Right lobe of liver (tissue), 6 donors: ENCODE measurements at regions of chr5 and their contacts with region 1.

Region 1: DNA sequence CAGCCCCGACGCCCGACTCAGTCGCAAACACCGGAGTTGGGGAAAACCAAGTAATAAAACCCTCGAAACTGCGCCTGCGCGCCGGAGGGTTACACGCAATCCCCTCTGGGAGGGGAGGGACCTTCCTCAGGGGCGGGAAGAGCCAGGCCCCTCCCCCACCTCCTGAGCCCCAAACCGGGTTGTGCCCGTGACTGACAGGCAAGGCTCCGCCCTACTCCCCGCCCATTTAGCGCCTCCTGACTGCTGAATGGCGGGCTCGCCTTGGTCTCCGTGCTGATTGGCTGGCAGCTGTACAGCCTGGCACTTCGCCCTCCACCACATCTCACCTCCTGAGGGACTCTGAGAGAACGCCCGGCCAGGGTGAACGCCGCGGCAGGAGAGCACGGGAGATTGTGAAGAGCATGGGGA is at the start of gene PRDM9:
- DNase-seq: peak; percentile 67 to 90 (median 88)
- ATAC-seq: peak; percentile 87 to 98 (median 98)
- H3K4me3 ChIP-seq: peak within 1 kb of the TSS; percentile 16 to 40 (median 33)
- H3K27ac ChIP-seq: peak within 1 kb of the TSS in 2 of 3 donors; percentile 44 to 60
- H3K4me1 ChIP-seq: no peaks in the 10 kb centered on the region
- H3K27me3 ChIP-seq: no peaks in the 10 kb centered on the region
- CTCF ChIP-seq: no peak
- POLR2A ChIP-seq: no peak
- total RNA-seq, gene PRDM9: not detected

Region 2: DNA sequence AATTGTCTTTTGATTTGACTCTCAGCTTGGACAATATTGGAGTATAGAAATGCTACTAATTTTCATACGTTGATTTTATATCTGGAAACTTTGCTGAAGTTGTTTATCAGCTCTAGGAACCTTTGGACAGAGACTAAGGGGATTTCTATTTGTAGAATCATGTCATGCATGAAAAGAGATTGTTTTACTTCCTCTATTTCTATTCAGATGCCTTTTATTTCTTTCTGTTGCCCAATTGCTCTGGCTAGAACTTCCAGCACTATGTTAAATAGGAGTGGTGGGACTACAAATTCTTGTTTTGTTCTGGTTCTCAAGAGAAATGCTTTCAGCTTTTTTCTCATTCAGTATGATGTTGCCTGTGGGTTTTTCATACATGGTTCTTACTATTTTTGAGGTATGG is 541.3 kb before region 1 on chr5:
- intact Hi-C with region 1: no loop called
- DNase-seq: no peak
- ATAC-seq: no peak
- H3K4me3 ChIP-seq: no peak overlapping the region
- H3K27ac ChIP-seq: no peak overlapping the region
- H3K4me1 ChIP-seq: no peaks in the 10 kb centered on the region
- H3K27me3 ChIP-seq: no peaks in the 10 kb centered on the region
- CTCF ChIP-seq: no peak
- POLR2A ChIP-seq: no peak

Region 3: DNA sequence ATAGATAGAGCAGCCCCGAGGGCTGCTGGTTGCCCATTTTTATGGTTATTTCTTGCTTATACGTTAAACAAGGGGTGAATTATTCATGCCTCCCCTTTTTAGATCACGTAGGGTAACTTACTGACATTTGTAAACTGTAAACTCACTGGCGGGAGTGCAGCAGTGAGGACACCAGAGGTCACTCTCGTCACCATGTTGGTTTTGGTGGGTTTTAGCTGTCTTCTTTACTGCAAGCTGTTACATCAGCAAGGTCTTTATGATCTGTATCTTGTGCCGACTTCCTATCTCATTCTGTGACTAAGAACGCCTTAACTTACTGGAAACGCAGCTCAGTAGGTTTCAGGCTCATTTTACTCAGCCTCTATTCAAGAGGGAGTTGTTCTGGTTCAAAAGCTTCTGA is 154.8 kb before region 1 on chr5:
- intact Hi-C with region 1: loop called in 1 of 2 experiments (anchors 10 kb)
- DNase-seq: peak in 2 of 3 donors; percentile 27 to 61
- ATAC-seq: peak; percentile 82 to 89 (median 85)
- H3K4me3 ChIP-seq: no peak overlapping the region
- H3K27ac ChIP-seq: no peak overlapping the region
- H3K4me1 ChIP-seq: no peaks in the 10 kb centered on the region
- H3K27me3 ChIP-seq: no peaks in the 10 kb centered on the region
- CTCF ChIP-seq: peak; percentile 60 to 71 (median 69)
- POLR2A ChIP-seq: no peak

Region 4: DNA sequence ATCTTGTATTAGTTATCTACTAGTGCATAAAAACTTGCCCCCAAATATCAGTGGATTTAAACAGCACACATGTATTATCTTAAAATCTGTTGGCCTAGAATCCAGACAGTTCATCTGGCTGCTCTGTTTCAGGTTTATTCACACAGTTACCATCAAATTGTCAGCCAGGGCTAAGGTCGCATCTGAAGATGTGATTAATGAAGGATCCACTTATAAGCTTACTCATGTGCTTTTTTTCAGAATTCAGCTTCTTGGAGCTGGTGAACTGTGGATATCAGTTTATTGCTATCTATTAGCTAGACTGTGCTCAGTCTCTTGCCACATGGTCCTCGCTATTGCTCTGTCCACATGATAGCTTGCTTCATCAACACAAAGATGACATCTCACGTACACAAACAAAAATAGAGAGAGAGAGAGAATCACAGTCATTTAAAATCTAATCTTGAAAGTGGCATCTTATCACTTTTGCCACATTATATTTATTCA is 81.6 kb after region 1 on chr5:
- intact Hi-C with region 1: no loop called
- DNase-seq: no peak
- ATAC-seq: no peak
- H3K4me3 ChIP-seq: no peak overlapping the region
- H3K27ac ChIP-seq: no peak overlapping the region
- H3K4me1 ChIP-seq: no peaks in the 10 kb centered on the region
- H3K27me3 ChIP-seq: no peaks in the 10 kb centered on the region
- CTCF ChIP-seq: no peak
- POLR2A ChIP-seq: no peak